CD14-positive monocyte (primary cell): ENCODE measurements at regions of chr2 and their contacts with region 1.

Region 1: DNA sequence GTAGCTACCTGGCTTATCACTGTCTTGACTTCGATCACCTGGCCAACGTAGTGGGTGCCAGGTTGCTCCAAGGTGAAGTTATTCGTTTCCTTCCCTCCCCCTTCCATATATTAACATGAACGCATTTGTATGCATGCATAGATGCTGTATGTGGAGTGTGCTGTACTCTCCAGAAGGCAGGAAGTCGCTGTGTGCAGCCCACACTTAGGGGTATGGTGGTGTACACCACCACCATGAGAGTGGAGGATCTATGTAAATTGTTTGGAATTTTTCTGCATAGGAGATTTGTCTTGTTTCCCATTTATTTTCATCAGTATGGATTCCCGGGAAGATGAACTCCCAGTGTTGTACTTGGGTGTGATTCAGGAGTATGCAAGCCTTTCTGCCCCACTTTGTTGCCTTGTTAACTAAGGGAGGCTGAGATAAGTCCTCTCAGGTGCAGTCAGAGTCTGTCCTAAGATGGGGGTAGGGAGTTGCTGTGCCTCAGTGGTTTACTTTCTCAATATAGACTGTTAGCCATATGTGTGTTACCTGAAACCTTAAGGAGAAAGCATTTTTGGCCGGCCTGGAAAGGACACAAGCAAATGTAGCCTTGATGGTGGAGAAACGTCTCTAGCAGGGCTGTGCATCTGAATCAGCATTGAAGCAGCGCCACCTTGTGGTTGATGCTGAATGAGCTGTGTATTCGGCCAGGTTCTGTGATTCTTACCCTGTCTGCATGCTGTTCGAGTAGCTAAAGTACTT is 149.8 kb downstream of the TANC1 start:
- DNase-seq: peak; percentile 56 to 70 (median 65)
- H3K4me3 ChIP-seq: no peak overlapping the region
- H3K4me3 Mint-ChIP-seq: no peak overlapping the region
- H3K27ac ChIP-seq: no peak overlapping the region
- H3K27ac Mint-ChIP-seq: no peak overlapping the region
- H3K4me1 ChIP-seq: no peaks in the 10 kb centered on the region
- H3K4me1 Mint-ChIP-seq: no peaks in the 10 kb centered on the region
- H3K27me3 ChIP-seq: no peaks in the 10 kb centered on the region
- H3K27me3 Mint-ChIP-seq: peaks cover 0 to 3% (median 1%) of the 10 kb centered on the region in 3 donors
- CTCF ChIP-seq: peak; percentile 91

Region 2: DNA sequence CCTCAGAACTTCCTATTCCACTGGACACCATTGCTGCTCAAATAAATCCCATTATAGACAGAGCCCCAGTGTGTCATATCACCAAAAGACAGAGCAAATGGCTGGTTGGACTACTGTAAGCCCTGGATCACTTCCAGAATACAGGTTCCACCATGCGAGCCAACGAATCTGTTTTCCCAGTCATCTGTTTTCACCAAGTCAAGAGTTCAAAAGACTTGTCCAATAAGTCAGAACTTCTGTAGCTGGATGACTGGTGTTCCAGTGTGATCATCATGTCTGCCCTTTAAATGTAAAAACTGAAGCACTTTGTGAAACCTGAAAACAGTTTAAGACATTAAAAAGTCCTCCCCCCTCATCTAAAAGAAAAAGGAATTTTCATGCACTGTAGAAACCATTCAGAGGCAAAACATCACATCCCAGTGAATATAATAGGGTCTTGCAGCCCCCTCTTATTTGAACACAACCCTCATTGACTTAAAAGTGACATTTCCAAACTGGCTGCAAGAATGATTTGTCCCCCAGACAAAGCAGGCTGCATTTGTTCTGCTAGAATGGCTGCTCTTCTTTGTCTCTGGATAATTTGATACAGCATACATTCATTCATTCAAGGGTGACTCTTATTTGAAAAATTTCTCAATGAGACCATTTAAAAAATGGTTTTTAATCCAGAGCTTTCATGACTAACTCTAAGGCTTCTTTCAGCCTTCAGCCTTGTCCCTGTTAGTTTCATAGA is 214.4 kb before region 1 on chr2:
- intact Hi-C with region 1: loop called (anchors 2 to 5 kb)
- DNase-seq: no peak
- H3K4me3 ChIP-seq: no peak overlapping the region
- H3K4me3 Mint-ChIP-seq: no peak overlapping the region
- H3K27ac ChIP-seq: no peak overlapping the region
- H3K27ac Mint-ChIP-seq: no peak overlapping the region
- H3K4me1 ChIP-seq: no peaks in the 10 kb centered on the region
- H3K4me1 Mint-ChIP-seq: no peaks in the 10 kb centered on the region
- H3K27me3 ChIP-seq: no peaks in the 10 kb centered on the region
- H3K27me3 Mint-ChIP-seq: peaks cover 0 to 1% (median 0%) of the 10 kb centered on the region in 3 donors
- CTCF ChIP-seq: no peak